Posterior vena cava (tissue), 2 donors: ENCODE measurements at regions of chr12 and their contacts with region 1.

Region 1: GRCh38 chr12:121595520-121595919 is 14.7 kb upstream of the KDM2B start:
- DNase-seq: no peak

Region 2: DNA sequence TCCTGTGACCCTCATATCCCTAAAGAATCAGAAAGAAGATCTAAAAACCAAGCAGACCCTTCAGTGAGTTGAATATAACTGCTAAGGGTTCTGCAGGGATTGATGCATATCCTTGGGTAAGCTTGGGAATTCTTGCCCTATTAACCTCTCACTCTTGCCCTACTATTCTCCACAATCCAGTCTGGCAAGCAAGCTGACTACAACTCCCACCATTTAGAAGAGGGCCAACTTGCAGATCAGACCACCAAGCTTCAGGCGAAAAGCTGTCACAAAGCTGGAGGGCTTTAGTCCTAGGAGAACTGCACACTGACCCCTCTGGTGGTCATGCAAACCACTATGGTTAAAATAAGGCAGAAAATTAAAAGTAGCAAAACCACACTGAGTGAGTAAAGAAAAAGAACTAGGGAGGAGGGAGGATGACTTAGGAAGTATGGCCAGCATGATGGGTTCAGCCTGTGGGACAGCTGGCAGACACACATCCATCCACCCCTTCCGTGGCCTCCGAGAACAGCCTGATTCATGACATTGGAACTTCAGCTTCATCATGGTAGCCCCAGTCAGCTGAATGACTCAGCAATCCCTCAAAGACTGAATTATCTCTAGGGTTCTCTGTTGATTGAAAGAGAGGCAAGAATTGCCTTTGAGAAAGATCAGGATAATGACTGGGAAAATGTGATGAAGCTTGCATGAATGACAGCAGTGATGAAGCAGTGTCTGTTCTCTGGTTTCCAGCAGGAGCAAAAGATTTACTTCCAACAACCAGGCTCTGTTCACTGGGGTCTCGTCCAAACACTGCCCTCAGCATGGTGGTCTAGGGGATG is 1530.9 kb after region 1 on chr12:
- intact Hi-C with region 1: loop called in 1 of 2 experiments (anchors 5 kb)
- DNase-seq: no peak